CD8-positive, alpha-beta T cell (primary cell): ENCODE measurements at regions of chr14 and their contacts with region 1.

Region 1: GRCh38 chr14:61326847-61327246 is 5.5 kb downstream of the PRKCH start:
- DNase-seq: peak in 3 of 9 experiments; percentile 24 to 62 (median 25)
- ATAC-seq: no peak
- H3K4me3 ChIP-seq: peak overlapping the region; percentile 90 to 94
- H3K4me3 Mint-ChIP-seq: peak overlapping the region; percentile 96
- H3K27ac ChIP-seq: peak overlapping the region; percentile 51 to 86
- H3K27ac Mint-ChIP-seq: peak overlapping the region; percentile 96
- H3K4me1 ChIP-seq: peaks cover 65% of the 10 kb centered on the region
- H3K4me1 Mint-ChIP-seq: peaks cover 60% of the 10 kb centered on the region
- H3K27me3 ChIP-seq: no peaks in the 10 kb centered on the region
- H3K27me3 Mint-ChIP-seq: no peaks in the 10 kb centered on the region
- CTCF ChIP-seq: no peak

Region 2: GRCh38 chr14:61347826-61348443 is 21.1 kb after region 1 on chr14:
- CTCF ChIA-PET with region 1: interaction called, 15 read pairs
- POLR2A ChIA-PET with region 1: interaction called, 38 read pairs
- intact Hi-C with region 1: no loop called
- DNase-seq: peak in 2 of 9 experiments; percentile 46 to 62
- ATAC-seq: no peak
- H3K4me3 ChIP-seq: peak overlapping the region; percentile 21 to 25
- H3K4me3 Mint-ChIP-seq: peak overlapping the region; percentile 82
- H3K27ac ChIP-seq: peak overlapping the region; percentile 36 to 77
- H3K27ac Mint-ChIP-seq: peak overlapping the region; percentile 99
- H3K4me1 ChIP-seq: peaks cover 98% of the 10 kb centered on the region
- H3K4me1 Mint-ChIP-seq: peaks cover 98% of the 10 kb centered on the region
- H3K27me3 ChIP-seq: no peaks in the 10 kb centered on the region
- H3K27me3 Mint-ChIP-seq: no peaks in the 10 kb centered on the region
- CTCF ChIP-seq: no peak